Body of pancreas (tissue), 4 donors: ENCODE measurements at regions of chr9 and their contacts with region 1.

Region 1: DNA sequence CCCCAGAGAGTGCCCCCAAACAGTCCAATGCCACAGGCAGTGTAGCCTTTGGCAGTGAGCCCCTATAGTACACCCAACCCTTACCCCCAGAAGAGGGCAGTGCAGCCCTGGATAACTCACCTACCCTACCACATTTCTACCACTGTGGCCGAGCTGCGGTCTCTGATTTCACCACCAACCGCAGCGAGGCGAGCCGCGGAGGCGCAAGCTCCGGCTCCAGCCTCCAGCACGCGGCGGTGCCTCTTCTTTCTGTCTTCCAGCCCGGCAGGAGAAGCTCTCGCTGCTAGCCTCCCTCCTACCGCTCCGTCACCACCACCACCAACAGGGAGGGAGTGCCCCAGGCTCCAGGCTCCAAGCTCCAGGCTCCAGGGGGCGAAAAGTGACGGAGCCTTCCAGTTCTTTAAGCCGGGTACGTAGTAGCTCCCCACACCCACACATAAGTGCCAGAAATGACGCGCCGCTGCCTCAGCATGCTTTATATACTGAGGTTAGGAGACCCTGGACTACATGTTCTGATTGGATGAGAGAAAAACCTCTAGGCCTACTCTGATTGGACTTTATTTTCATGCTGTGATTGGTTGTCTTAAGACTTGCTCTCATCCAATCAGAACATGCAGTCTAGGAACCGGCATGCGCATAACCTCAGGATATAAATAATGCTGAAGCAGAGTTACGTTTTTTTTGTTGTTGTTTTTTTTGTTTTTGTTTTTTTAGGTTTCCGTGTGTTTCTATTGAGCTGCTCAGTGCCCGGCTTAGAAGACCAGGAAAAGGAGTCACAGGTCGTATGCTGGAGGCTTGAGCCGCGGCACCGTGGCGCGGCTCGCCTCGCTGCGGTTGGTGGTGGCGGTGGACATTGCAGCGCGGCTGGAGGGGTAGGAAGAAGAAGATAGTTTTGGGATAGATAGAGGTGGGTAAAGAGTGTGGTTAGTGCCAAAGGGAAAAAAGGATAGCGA is at the start of gene PCAT7:
- DNase-seq: peak; percentile 87 to 90 (median 89)
- ATAC-seq: peak; percentile 100
- H3K4me3 ChIP-seq: peak within 1 kb of the TSS in 1 of 2 donors; percentile 25
- H3K27ac ChIP-seq: peak within 1 kb of the TSS; percentile 52 to 86 (median 82)
- H3K4me1 ChIP-seq: peaks cover 12% of the 10 kb centered on the region
- H3K27me3 ChIP-seq: no peaks in the 10 kb centered on the region
- CTCF ChIP-seq: peak; percentile 58 to 98 (median 95)
- POLR2A ChIP-seq: peak in 2 of 3 donors; percentile 63 to 75
- total RNA-seq, gene PCAT7: 0.78 TPM in 1 of 2 donors, not detected in the other

Region 2: GRCh38 chr9:94603259-94604160 is 48.8 kb after region 1 on chr9:
- intact Hi-C with region 1: loop called (anchors 10 kb)
- DNase-seq: peak; percentile 75 to 84 (median 78)
- ATAC-seq: peak; percentile 78
- H3K4me3 ChIP-seq: no peak overlapping the region
- H3K27ac ChIP-seq: peak overlapping the region; percentile 13 to 47 (median 22)
- H3K4me1 ChIP-seq: peaks cover 19% of the 10 kb centered on the region
- H3K27me3 ChIP-seq: no peaks in the 10 kb centered on the region
- CTCF ChIP-seq: peak; percentile 34 to 82 (median 61)
- POLR2A ChIP-seq: no peak